Activated naive CD4-positive, alpha-beta T cell treated with anti-CD3 and anti-CD28 coated beads, Interleukin-2, amount 10 ng/mL, durations not matched to agents 7 days and 5 days (primary cell): ENCODE measurements at regions of chr1 and their contacts with region 1.

Region 1: DNA sequence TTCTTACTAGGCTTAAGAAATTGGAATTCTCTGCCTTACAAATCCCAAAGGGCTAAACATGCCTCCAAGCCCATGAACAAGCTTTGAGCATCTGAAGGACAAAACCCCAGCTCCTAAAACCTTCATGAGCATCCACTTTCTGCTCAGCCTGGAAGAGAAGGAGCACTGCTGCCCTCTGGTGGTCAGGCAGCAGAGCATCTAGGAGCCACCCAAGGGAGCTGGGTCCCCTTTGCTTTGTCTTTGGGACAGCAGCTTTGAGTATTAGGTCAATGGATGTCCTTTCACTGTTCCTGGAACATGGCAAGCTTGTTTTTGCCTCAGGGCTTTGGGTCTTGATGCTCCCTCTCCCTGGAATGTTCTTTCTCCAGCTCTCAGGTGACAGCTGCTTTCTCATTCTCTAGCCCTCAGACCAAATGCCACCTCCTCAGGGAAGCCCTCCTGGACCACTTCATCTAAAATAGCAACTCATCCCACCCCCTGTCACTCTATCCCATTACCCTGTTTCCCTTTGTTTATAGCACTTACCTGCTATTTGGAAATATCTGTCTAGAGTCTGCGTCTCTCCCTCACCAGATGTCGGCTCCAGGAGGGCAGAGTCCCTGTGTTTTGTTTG is 25.7 kb downstream of the RAB7B start:
- DNase-seq: peak; percentile 85
- H3K4me3 Mint-ChIP-seq: no peak overlapping the region
- H3K27ac Mint-ChIP-seq: no peak overlapping the region
- H3K4me1 Mint-ChIP-seq: no peaks in the 10 kb centered on the region
- H3K27me3 Mint-ChIP-seq: no peaks in the 10 kb centered on the region

Region 2: DNA sequence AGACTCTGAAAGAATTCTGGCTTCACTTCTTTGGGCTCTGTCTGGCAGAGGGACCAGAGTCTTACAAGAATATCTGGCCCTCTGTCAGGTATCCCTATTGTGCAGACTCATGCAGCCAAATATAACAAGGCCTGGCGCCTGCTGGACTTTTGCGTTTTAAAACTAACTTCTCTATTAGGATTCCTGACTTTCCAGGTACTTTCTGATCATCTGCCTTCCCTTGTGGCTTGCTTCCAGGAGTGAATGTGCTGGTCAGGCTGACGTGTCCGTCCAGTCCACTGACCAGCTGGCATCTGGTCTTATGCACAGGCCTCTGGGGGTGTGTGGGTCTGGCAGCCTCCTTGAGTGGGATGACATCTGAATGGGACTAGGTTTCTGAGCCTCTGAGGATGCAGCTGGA is 193.6 kb before region 1 on chr1:
- CTCF ChIA-PET with region 1: interaction called, 186 read pairs
- DNase-seq: no peak
- H3K4me3 Mint-ChIP-seq: no peak overlapping the region
- H3K27ac Mint-ChIP-seq: no peak overlapping the region
- H3K4me1 Mint-ChIP-seq: peaks cover 16% of the 10 kb centered on the region
- H3K27me3 Mint-ChIP-seq: peaks cover 4% of the 10 kb centered on the region

Region 3: GRCh38 chr1:205919026-205919746 is 58.3 kb before region 1 on chr1:
- CTCF ChIA-PET with region 1: interaction called, 219 read pairs
- DNase-seq: peak; percentile 84
- H3K4me3 Mint-ChIP-seq: no peak overlapping the region
- H3K27ac Mint-ChIP-seq: no peak overlapping the region
- H3K4me1 Mint-ChIP-seq: no peaks in the 10 kb centered on the region
- H3K27me3 Mint-ChIP-seq: peaks cover 22% of the 10 kb centered on the region

Region 4: GRCh38 chr1:205942631-205943159 is 34.8 kb before region 1 on chr1:
- CTCF ChIA-PET with region 1: interaction called, 10 read pairs
- DNase-seq: no peak
- H3K4me3 Mint-ChIP-seq: no peak overlapping the region
- H3K27ac Mint-ChIP-seq: no peak overlapping the region
- H3K4me1 Mint-ChIP-seq: no peaks in the 10 kb centered on the region
- H3K27me3 Mint-ChIP-seq: peaks cover 77% of the 10 kb centered on the region

Region 5: DNA sequence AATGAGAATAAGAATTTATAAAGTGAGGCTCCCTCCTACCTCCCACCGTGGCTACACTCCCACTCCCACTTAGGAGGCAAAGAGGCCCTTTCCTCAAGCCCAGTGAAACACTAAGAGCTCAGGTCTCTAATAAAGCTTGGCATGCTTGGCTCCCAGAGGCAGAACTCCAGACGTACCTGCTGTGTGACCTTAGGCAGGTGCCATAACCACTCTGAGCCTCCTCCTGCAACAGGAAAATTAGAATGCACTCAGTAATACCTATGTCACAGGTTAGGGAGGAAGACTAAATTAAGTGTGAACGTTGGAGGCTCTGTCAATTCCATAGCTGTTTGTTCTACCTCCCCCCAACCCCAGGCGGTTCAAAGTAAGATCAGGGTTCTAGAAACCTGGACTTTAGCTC is 17.7 kb before region 1 on chr1:
- CTCF ChIA-PET with region 1: interaction called, 24 read pairs
- DNase-seq: no peak
- H3K4me3 Mint-ChIP-seq: no peak overlapping the region
- H3K27ac Mint-ChIP-seq: no peak overlapping the region
- H3K4me1 Mint-ChIP-seq: peaks cover 2% of the 10 kb centered on the region
- H3K27me3 Mint-ChIP-seq: peaks cover 76% of the 10 kb centered on the region

Region 6: GRCh38 chr1:205998457-205999241 is 21.1 kb after region 1 on chr1:
- CTCF ChIA-PET with region 1: interaction called, 11 read pairs
- DNase-seq: peak; percentile 16
- H3K4me3 Mint-ChIP-seq: no peak overlapping the region
- H3K27ac Mint-ChIP-seq: no peak overlapping the region
- H3K4me1 Mint-ChIP-seq: no peaks in the 10 kb centered on the region
- H3K27me3 Mint-ChIP-seq: peaks cover 29% of the 10 kb centered on the region

Region 7: GRCh38 chr1:206106328-206107167 is 129.0 kb after region 1 on chr1:
- CTCF ChIA-PET with region 1: interaction called, 89 read pairs
- DNase-seq: peak; percentile 88
- H3K4me3 Mint-ChIP-seq: no peak overlapping the region
- H3K27ac Mint-ChIP-seq: no peak overlapping the region
- H3K4me1 Mint-ChIP-seq: no peaks in the 10 kb centered on the region
- H3K27me3 Mint-ChIP-seq: peaks cover 42% of the 10 kb centered on the region